Thyroid gland (tissue), 4 donors: ENCODE measurements at regions of chr1 and their contacts with region 1.

Region 1: DNA sequence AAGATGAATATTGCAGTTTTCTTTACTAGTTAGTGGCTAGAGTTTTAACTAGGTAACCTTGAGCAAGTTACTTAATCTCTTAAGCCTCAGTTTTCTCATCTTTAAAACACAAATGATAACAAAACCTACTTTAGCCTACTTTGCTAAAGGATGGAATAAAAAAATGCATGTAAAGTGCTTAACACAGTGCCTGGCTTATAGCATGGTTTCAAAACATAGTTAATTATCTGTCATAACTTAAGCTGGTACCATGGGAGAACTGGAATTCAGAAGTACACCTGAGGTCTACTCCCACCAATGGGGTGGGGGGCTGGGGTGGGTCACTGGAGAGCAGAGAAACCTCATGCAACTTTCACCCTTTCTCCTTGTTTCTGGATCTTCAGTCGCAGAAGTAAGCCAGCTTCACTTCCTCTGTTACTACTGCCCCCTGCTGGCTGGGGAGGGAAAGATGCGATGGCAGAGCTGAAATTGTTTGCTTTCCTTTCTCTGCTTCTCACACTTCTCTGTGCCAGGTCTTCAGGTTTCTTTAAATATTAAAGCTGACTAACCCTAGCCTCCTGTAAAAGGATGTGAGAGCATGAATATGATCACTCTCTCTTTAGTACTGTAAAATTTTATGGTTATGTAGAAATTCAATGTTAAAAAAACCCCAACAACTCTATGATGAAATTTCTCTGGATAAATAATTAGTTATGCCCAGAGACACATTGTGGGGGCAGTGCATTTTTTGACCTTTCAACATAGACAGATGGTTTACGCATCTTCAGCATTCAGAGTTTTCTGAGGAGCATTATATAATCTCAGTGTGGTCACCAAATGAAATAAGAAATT is 324.2 kb downstream of the HLX start:
- DNase-seq: peak; percentile 62 to 78
- H3K4me3 ChIP-seq: no peak overlapping the region
- H3K27ac ChIP-seq: no peak overlapping the region
- H3K4me1 ChIP-seq: peaks cover 15 to 16% of the 10 kb centered on the region in 2 donors
- H3K27me3 ChIP-seq: no peaks in the 10 kb centered on the region
- CTCF ChIP-seq: peak; percentile 44 to 81 (median 55)
- POLR2A ChIP-seq: no peak

Region 2: GRCh38 chr1:220810179-220810653 is 393.2 kb before region 1 on chr1:
- intact Hi-C with region 1: loop called (anchors 10 kb)
- DNase-seq: peak; percentile 77 to 78
- H3K4me3 ChIP-seq: no peak overlapping the region
- H3K27ac ChIP-seq: no peak overlapping the region
- H3K4me1 ChIP-seq: peaks cover 0 to 5% of the 10 kb centered on the region in 2 donors
- H3K27me3 ChIP-seq: no peaks in the 10 kb centered on the region
- CTCF ChIP-seq: peak; percentile 76 to 90 (median 86)
- POLR2A ChIP-seq: no peak

Region 3: DNA sequence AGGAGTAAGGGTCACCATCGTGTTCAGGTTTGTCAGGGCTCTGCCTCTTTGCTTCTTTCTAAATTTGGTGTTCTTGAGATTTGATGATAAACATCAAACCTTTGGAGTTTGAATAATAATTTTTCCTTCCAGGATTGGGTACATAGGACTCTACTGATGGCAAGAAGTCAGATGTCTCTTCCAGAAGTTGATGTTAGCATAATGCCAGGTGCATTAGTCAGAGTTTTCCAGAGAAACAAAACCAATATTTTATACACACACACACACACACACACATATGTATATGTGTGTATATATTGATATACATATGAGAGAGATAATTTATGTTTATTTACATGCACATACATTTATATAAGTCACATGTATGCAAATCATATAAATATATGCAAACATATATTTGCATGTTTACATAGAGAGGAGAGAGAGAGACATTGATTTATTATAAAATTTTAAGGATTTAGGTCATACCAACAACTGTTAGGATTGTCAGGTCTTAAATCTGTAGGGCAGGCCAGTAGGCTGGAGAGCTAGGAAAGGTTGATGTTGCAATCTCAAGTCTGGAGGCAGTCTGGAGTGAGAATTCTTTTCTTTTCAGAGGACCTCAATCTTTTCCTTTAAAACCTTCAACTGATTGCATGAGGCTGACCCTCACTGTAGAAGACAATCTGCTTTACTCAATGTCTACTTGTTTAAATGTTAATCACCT is 125.0 kb before region 1 on chr1:
- intact Hi-C with region 1: no loop called
- DNase-seq: no peak
- H3K4me3 ChIP-seq: no peak overlapping the region
- H3K27ac ChIP-seq: no peak overlapping the region
- H3K4me1 ChIP-seq: no peaks in the 10 kb centered on the region
- H3K27me3 ChIP-seq: no peaks in the 10 kb centered on the region
- CTCF ChIP-seq: no peak
- POLR2A ChIP-seq: no peak

Region 4: GRCh38 chr1:221394011-221394544 is 190.6 kb after region 1 on chr1:
- intact Hi-C with region 1: no loop called
- DNase-seq: no peak
- H3K4me3 ChIP-seq: no peak overlapping the region
- H3K27ac ChIP-seq: peak overlapping the region in 1 of 3 donors; percentile 2
- H3K4me1 ChIP-seq: no peaks in the 10 kb centered on the region
- H3K27me3 ChIP-seq: no peaks in the 10 kb centered on the region
- CTCF ChIP-seq: no peak
- POLR2A ChIP-seq: no peak